SK-N-SH (cell line): ENCODE measurements at regions of chr14 and their contacts with region 1.

Region 1: DNA sequence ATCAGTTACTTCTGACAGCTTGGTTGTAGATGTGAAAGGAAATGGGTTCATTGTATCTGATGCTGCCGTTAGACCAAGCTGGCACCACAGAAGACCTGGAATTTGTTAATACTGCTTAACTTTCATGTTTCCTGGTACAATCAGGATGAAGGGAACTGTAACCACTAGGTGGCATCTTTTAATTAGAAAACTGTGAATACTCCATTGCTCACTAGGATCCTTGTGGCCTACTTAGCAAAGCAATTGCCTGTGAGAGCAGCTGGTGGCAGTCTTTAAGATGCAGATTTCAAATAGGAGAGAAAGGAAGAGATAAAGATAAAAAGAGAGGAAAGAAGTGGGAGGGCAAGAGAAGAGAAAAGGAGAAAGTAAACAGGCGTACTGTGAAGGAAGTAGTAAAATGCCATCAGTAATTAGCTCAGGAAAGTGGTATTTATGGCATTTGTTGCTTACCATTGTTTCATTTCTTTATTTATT is 114.5 kb downstream of the RAD51B start:
- DNase-seq: peak; percentile 53
- H3K4me3 ChIP-seq: no peak overlapping the region
- H3K27ac ChIP-seq: peak overlapping the region in 1 of 2 experiments; percentile 50; a peak in 1 of 4 replicates
- H3K4me1 ChIP-seq: peaks cover 0 to 5% of the 10 kb centered on the region in 2 experiments; a peak in 3 of 4 replicates
- H3K27me3 ChIP-seq: no peaks in the 10 kb centered on the region
- CTCF ChIP-seq: peak; percentile 72
- EP300 ChIP-seq: no peak
- RAD21 ChIP-seq: peak; percentile 68

Region 2: DNA sequence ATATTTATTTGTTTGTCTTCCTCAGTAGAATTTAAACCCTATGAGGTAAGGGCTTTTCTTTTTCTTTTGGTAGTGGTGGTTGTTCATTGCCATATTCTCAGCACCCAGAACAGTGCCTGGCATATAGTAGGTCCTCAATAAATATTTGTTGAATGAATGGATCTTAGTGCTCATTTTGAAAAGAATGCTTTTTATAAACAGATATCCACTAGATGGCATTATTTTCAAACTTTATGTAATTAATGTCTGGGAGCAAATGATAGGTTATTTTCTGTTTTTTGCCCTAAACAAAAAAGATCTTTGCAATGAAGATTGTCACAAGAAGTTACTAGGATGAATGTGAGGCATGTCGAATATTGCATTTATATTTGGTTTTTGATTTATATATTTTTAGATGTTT is 50.3 kb before region 1 on chr14:
- CTCF ChIA-PET with region 1: interaction called, 10 read pairs
- POLR2A ChIA-PET with region 1: no interaction called
- DNase-seq: no peak
- H3K4me3 ChIP-seq: no peak overlapping the region
- H3K27ac ChIP-seq: no peak overlapping the region
- H3K4me1 ChIP-seq: no peaks in the 10 kb centered on the region; a peak in 1 of 4 replicates
- H3K27me3 ChIP-seq: no peaks in the 10 kb centered on the region
- CTCF ChIP-seq: peak; percentile 61
- EP300 ChIP-seq: no peak
- RAD21 ChIP-seq: peak; percentile 52

Region 3: GRCh38 chr14:67917006-67917405 is 17.0 kb before region 1 on chr14:
- CTCF ChIA-PET with region 1: interaction called, 14 read pairs
- POLR2A ChIA-PET with region 1: no interaction called
- DNase-seq: no peak
- H3K4me3 ChIP-seq: no peak overlapping the region
- H3K27ac ChIP-seq: no peak overlapping the region
- H3K4me1 ChIP-seq: peaks cover 0 to 13% of the 10 kb centered on the region in 2 experiments; a peak in 1 of 4 replicates
- H3K27me3 ChIP-seq: no peaks in the 10 kb centered on the region
- CTCF ChIP-seq: no peak
- EP300 ChIP-seq: no peak
- RAD21 ChIP-seq: no peak